ENCODE measurements at regions of chr1 and their contacts with region 1.

Region 1: DNA sequence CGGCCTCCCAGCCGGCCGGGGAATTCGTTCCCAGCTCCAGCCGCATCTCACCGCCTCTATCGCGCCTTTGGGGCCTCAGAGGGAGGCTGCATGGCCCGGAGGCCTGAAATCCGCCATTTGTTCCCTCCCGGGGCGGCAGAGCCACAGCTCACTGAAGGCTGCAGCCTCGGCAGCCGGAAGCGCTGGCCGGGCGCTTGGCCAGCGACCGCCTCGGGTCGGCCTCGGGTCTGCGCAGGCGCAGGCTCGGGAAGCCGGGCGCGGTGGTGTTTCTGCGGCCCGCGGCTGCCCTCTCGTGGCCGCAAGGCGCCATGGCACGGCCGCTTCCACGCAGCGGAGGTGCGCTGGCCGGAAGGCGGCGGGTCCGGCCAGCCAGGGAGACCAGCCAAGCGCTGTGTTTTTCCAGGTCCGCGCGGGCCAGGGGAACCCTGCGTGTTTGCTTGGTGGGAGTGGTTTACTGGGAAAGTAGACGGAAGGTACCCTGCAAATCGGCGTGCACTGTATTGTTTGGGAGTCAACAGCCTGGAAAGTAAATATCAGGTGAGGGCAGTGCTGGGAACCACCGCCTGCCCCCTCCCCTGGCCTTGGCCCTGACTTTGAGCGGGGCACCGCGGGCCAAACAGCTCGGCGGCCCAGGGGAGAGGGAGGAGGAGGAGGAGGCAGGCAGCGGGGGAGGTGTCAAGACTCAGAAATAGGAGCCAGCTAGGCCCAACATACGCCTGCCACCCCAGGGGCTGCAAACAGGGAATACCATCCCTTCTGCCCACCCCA is 52.7 kb upstream of the CD34 start:
- DNase-seq: no peak
- H3K4me3 ChIP-seq: peak overlapping the region; percentile 61
- CTCF ChIP-seq: peak; percentile 96

Region 2: GRCh38 chr1:207828485-207829158 is 135.0 kb before region 1 on chr1:
- CTCF ChIA-PET with region 1: interaction called, 68 read pairs
- POLR2A ChIA-PET with region 1: no interaction called
- DNase-seq: no peak
- H3K4me3 ChIP-seq: no peak overlapping the region
- CTCF ChIP-seq: peak; percentile 77

Region 3: DNA sequence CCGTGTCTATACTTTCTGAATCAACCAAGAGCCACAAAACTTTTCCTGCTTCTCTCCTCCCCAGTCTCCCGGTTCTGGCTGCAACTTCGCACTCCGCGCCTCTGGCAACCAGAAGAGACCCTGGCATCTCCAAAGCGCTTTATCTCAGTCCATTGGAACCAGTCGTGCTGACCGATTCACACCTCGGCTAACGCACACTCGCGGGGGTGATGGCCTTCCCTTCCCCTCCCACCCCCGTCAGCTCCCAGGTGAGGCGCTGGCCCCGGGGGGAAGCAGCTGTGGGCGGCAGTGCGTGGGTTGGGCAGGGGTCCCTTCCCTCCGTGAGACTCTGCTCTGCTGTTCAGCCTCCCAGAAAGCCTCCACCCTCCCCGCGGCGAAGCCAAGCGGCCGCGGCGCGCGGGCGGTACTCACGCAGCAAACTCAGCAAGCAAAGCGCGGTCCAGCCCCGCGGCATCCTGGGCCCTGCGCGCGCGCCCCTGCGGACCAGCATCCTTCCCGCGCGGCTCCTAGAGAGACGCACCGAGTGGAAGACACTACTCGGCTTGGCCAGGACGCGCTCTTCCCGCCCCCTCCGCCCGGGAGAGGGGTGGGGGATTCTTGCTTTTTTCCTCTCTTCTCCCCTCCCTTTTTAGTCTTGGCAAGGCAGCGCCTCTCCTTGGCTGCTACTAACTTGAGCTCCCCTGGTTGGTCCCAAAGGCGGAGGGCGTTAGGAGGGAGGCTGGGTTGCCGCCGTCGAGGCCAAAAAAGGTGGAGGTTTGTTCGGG is 52.8 kb before region 1 on chr1 and contains the start of gene CD34:
- CTCF ChIA-PET with region 1: interaction called, 14 read pairs
- POLR2A ChIA-PET with region 1: no interaction called
- DNase-seq: no peak
- H3K4me3 ChIP-seq: peak within 1 kb of the TSS; percentile 36
- CTCF ChIP-seq: no peak

Region 4: DNA sequence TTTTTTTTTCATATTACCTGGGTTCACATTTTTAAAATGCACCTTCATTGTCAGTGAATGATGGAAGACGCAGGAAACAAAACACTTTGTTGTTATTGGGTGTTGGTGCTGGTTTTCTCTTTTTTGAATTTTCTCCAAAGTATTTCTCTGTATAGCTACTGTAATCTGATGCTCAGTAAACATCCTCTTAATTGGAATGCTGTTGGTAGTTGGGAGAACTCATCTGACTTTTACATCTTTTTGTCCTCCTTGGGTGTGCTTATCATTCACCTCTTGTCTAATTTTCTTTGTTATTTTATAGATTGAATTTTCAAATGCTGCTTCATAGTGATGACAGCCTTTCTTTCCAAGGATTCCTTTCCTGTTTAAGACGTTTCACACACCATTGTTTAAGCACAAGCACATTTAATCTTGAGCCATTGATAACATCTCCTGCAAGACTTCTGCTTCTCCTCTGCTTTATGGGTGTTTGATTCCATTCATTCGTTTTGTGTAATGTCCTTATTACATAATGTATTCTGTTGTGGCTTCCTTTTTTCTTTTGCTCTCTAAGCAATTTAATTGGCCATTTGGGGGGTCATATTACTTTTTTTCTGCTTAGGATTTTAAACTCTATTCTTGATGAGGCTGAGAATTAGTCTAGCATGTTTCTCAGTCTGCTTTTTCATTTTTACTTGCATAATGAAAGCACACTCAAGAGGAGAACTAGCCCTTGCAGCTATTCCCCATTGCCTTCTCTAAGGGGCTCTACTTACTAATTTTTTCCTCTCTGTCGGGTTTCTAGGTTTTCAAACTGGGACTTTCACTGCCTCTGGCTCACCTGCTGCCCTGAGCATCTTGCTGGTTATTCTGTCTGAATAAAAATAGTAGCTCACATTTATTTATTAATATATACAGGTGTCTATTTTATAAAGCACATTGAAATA is 10.7 kb before region 1 on chr1:
- CTCF ChIA-PET with region 1: interaction called, 55 read pairs
- POLR2A ChIA-PET with region 1: no interaction called
- DNase-seq: no peak
- H3K4me3 ChIP-seq: no peak overlapping the region
- CTCF ChIP-seq: no peak

Region 5: DNA sequence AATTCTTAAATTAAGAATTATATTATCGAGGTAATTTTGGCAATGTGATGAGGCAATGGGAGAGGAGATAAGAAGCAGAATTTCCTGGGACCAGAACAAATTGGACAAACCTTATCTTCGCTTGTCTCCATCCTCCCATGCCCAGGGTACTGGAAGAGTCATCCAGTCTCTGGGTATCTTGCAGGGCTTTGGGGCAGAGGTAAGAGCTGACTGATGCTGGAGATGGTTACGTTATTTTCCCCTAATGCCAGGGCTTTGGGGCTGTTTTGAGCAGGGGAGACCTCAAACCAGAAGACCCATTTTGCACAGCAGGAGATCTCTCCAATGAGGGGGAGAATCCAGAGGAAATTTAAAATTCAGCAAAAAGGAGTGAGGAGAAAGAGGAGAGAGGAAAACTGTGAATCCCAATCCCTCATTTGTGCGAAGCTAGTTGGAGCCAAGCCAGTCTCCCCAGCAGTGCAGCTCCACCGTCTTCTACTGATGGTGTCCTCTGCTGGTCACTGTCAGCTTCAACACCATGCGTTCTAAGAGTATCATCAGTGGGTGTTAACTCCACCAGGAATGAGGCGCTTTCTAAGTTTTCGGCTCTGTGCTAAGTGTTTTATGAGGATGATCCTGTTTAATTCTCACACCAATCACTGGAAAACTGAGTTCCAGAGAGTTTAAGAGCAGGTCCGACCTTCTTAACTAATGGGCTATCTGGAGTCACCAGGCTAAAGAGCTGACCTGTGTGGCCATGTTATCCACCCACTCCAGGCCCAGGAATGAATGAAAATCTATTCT is 34.1 kb after region 1 on chr1:
- CTCF ChIA-PET with region 1: interaction called, 13 read pairs
- POLR2A ChIA-PET with region 1: no interaction called
- DNase-seq: no peak
- H3K4me3 ChIP-seq: no peak overlapping the region
- CTCF ChIP-seq: peak; percentile 90

Measured in AG04449 (cell line).